ENCODE measurements at regions of chr18 and their contacts with region 1.

Region 1: DNA sequence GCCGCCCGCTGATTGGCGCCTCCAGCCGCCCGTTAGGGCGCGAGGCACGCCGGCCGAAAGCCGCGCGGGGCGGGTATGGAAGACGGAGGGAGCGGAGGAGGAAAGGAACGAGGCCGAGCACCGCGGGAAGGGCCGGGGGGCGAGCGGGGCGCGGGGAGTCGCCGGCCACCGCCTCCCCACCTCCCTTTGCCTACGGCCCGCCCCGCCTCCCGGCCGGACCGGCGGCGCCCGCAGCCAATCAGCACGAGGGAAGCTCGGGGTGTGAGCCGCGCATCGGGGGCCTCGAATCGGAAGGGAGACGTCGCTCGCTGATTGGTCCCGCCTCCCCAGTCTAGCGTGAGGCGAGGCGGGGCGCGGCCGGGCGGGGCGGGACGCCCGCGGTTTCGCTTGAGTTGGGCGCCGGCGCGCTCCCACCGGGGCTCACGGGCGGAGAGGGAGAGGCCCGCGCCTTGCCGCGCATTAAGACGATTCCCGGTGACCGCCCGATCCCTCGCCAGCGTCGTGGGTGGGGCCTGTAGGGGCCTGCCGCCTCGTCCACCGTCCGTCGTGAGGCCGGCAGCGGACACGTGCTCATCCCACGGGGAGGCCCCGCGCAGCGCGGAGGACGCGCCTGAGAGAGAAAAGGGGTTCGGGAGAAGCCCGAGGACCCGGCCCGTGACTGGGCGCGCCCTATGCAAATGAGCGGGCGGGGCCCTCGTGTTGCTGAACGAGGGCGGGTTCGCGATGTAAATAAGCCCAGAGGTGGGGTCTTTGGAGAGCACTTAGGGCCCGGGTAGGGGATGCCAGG is 665 bp upstream of the SMAD2 start:
- DNase-seq: peak; percentile 88 to 91
- H3K4me3 ChIP-seq: peak overlapping the region; percentile 68
- H3K27ac ChIP-seq: peak overlapping the region; percentile 92
- H3K4me1 ChIP-seq: peaks cover 24% of the 10 kb centered on the region
- H3K27me3 ChIP-seq: no peaks in the 10 kb centered on the region
- CTCF ChIP-seq: no peak

Region 2: DNA sequence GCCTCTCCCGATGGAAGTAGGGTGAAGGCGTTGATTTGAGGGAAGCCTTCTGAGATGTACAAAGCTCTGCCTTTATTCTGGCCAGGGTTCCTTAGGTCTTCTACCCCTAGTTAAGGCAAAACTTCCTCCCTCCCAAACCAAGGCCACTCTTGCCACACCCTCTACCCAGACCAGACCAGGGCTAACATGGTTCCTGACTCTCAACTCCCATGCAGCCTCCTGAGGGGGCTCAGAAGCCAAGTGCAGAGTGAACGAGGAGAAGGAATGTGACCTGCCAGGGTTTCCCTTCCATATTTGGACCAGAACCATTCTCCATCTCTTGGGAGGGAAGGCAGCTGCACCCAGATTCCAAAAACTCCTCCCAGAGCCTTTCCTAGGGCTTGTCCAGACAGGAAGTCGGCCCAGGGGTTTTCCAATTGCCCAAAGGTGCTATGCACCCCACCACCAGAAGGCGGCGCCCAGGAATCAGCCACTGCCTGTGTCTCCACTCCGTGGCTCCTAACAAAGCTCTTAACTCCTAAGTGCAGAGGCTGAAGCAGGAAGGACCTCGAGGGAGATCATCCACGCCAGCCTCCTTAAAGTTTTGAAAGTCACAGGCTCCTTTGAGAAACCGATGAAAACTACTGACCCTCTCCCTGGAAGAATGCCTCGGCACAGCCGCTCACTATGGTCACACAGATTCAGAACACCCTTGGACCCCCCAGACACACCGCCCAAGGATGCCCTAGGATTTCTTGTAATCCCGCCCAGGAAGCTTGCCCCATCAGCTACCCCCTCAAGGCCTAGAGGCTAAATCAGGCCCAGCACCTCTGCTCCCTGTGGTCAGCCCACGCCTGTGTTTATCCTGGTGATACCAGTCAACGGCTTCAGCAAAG is 158.5 kb before region 1 on chr18:
- CTCF ChIA-PET with region 1: no interaction called
- POLR2A ChIA-PET with region 1: no interaction called
- intact Hi-C with region 1: loop called (anchors 5 kb)
- DNase-seq: peak; percentile 44 to 74
- H3K4me3 ChIP-seq: no peak overlapping the region
- H3K27ac ChIP-seq: no peak overlapping the region
- H3K4me1 ChIP-seq: no peaks in the 10 kb centered on the region
- H3K27me3 ChIP-seq: no peaks in the 10 kb centered on the region
- CTCF ChIP-seq: peak; percentile 90

Region 3: GRCh38 chr18:47883771-47884413 is 47.2 kb before region 1 on chr18:
- CTCF ChIA-PET with region 1: no interaction called
- POLR2A ChIA-PET with region 1: interaction called, 10 read pairs
- intact Hi-C with region 1: no loop called
- DNase-seq: peak in 1 of 2 experiments; percentile 49
- H3K4me3 ChIP-seq: no peak overlapping the region
- H3K27ac ChIP-seq: peak overlapping the region; percentile 58
- H3K4me1 ChIP-seq: peaks cover 46% of the 10 kb centered on the region
- H3K27me3 ChIP-seq: no peaks in the 10 kb centered on the region
- CTCF ChIP-seq: no peak

Region 4: DNA sequence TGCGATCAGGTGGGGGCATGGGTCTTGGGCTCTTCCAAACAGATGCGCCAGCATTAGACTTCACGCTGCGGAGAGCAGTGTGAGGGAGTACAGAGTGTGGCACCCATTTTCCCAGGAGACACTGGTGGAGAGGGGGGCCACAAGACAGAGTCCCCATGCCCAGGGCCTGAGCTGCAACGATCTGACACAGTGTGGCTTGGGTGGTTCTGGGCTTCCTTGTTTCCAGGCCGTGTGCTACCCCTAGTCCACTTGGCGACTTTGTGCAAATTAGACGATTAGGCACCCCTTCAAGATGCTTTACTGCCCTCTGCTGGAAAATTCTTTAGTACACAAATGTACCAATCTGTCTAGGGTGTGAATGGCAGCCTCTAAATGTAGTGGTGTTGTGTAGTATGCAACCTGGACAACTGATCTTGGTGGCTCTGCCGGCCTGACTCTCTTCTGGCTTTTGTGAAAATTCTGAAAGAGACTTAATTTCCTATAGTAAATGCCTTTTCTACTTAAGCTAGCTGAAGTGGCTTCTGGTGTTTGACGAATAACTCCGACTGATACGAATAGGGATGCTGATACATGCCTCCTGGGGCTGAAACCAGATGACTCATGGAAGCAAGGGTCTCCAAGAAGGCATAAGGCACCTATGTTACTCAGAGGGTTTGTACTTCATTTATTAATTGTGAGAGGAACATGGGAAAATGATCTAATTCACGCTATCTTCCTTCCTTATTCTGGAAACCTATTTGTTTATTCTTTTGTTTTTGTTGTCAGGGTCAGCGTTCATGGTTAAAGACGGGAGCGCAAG is 91.6 kb after region 1 on chr18:
- CTCF ChIA-PET with region 1: no interaction called
- POLR2A ChIA-PET with region 1: no interaction called
- intact Hi-C with region 1: loop called (anchors 1 kb)
- DNase-seq: peak in 1 of 2 experiments; percentile 71
- H3K4me3 ChIP-seq: no peak overlapping the region
- H3K27ac ChIP-seq: no peak overlapping the region
- H3K4me1 ChIP-seq: peaks cover 21% of the 10 kb centered on the region
- H3K27me3 ChIP-seq: peaks cover 10% of the 10 kb centered on the region; the same call in 1 of the 2 replicates
- CTCF ChIP-seq: peak; percentile 76

Region 5: GRCh38 chr18:48452861-48453723 is 522.0 kb after region 1 on chr18:
- CTCF ChIA-PET with region 1: no interaction called
- POLR2A ChIA-PET with region 1: no interaction called
- intact Hi-C with region 1: loop called (anchors 2 kb)
- DNase-seq: peak; percentile 83 to 95
- H3K4me3 ChIP-seq: peak overlapping the region; percentile 19; the same call in 1 of the 2 replicates
- H3K27ac ChIP-seq: peak overlapping the region; percentile 89
- H3K4me1 ChIP-seq: peaks cover 68% of the 10 kb centered on the region
- H3K27me3 ChIP-seq: no peaks in the 10 kb centered on the region
- CTCF ChIP-seq: no peak; the same call in 1 of the 2 replicates